ENCODE measurements at regions of chr5 and their contacts with region 1.

Region 1: GRCh38 chr5:132576123-132576522 is 19.3 kb downstream of the RAD50 start:
- DNase-seq: no peak
- H3K4me3 ChIP-seq: no peak overlapping the region
- H3K27ac ChIP-seq: no peak overlapping the region
- H3K4me1 ChIP-seq: no peaks in the 10 kb centered on the region
- H3K27me3 ChIP-seq: no peaks in the 10 kb centered on the region
- CTCF ChIP-seq: no peak

Region 2: GRCh38 chr5:132055808-132056609 is 520.1 kb before region 1 on chr5:
- intact Hi-C with region 1: no loop called
- DNase-seq: peak; percentile 24
- H3K4me3 ChIP-seq: no peak overlapping the region
- H3K27ac ChIP-seq: no peak overlapping the region
- H3K4me1 ChIP-seq: no peaks in the 10 kb centered on the region
- H3K27me3 ChIP-seq: no peaks in the 10 kb centered on the region
- CTCF ChIP-seq: no peak

Region 3: DNA sequence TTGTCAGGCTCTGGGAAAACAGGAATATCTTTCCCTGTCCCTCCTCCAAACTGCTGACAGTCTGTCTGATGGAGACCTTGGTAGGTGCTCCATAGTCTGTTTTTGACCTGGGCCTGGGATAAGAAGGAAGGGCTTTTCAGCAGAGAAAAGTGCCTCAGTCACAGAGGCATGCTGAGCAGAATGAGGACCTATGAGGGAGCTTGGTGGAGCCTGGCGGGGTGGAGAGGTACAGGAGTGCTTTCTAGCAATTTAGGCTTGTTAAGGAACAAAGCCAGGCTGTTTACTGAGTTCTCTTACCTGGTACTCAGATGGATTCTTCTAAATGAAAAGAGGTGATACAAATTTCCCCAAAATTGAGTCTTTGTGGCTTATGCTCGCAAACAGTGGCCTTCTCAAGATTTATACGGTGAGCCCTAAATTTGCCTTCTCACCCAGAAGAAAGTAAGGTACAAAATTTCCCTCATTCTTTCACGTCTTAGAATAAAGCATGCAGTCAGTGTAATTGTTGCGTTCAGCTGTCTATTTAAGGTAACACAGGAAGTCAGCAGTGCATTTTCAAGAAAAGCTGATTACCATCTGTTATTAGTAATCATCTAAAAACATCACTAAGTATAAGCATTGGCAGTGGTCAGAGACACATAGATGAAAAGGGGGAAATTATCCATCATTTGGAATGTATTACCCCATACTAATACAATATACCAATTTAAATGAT is 53.3 kb after region 1 on chr5:
- intact Hi-C with region 1: loop called (anchors 10 kb)
- DNase-seq: no peak
- H3K4me3 ChIP-seq: no peak overlapping the region
- H3K27ac ChIP-seq: no peak overlapping the region
- H3K4me1 ChIP-seq: no peaks in the 10 kb centered on the region
- H3K27me3 ChIP-seq: no peaks in the 10 kb centered on the region
- CTCF ChIP-seq: no peak

Measured in colonic mucosa (tissue), 4 donors.